ENCODE measurements at regions of chr3 and their contacts with region 1.

Region 1: GRCh38 chr3:58237238-58237940 is at the start of gene ABHD6:
- DNase-seq: peak; percentile 58
- H3K4me3 ChIP-seq: peak within 1 kb of the TSS; percentile 89 to 93
- H3K27ac ChIP-seq: peak within 1 kb of the TSS; percentile 80 to 86
- H3K4me1 ChIP-seq: no peaks in the 10 kb centered on the region
- H3K27me3 ChIP-seq: no peaks in the 10 kb centered on the region
- CTCF ChIP-seq: peak; percentile 37 to 72 (median 64)
- POLR2A ChIP-seq: no peak
- total RNA-seq, gene ABHD6: 13.2 to 16.9 TPM

Region 2: GRCh38 chr3:58305882-58306711 is 68.7 kb after region 1 on chr3 and contains the starts of genes HTD2 and RPP14:
- intact Hi-C with region 1: loop called (anchors 2 kb)
- DNase-seq: peak; percentile 95
- H3K4me3 ChIP-seq: peak within 1 kb of the TSS; percentile 75 to 88
- H3K27ac ChIP-seq: peak within 1 kb of the TSS; percentile 95 to 98
- H3K4me1 ChIP-seq: peaks cover 17% of the 10 kb centered on the region
- H3K27me3 ChIP-seq: no peaks in the 10 kb centered on the region
- CTCF ChIP-seq: peak; percentile 98 to 99 (median 98)
- POLR2A ChIP-seq: peak; percentile 57
- total RNA-seq, gene HTD2: 15.4 to 17.1 TPM
- total RNA-seq, gene RPP14: 7.1 to 12.5 TPM

Region 3: GRCh38 chr3:58471025-58471887 is 233.9 kb after region 1 on chr3:
- intact Hi-C with region 1: no loop called
- DNase-seq: peak; percentile 82
- H3K4me3 ChIP-seq: no peak overlapping the region
- H3K27ac ChIP-seq: peak overlapping the region in 1 of 2 donors; percentile 29
- H3K4me1 ChIP-seq: no peaks in the 10 kb centered on the region
- H3K27me3 ChIP-seq: no peaks in the 10 kb centered on the region
- CTCF ChIP-seq: no peak
- POLR2A ChIP-seq: no peak

Measured in prostate gland (tissue), 2 donors.